Activated CD4-positive, alpha-beta memory T cell treated with anti-CD3 and anti-CD28 coated beads for 36 hours (primary cell): ENCODE measurements at regions of chr19 and their contacts with region 1.

Region 1: DNA sequence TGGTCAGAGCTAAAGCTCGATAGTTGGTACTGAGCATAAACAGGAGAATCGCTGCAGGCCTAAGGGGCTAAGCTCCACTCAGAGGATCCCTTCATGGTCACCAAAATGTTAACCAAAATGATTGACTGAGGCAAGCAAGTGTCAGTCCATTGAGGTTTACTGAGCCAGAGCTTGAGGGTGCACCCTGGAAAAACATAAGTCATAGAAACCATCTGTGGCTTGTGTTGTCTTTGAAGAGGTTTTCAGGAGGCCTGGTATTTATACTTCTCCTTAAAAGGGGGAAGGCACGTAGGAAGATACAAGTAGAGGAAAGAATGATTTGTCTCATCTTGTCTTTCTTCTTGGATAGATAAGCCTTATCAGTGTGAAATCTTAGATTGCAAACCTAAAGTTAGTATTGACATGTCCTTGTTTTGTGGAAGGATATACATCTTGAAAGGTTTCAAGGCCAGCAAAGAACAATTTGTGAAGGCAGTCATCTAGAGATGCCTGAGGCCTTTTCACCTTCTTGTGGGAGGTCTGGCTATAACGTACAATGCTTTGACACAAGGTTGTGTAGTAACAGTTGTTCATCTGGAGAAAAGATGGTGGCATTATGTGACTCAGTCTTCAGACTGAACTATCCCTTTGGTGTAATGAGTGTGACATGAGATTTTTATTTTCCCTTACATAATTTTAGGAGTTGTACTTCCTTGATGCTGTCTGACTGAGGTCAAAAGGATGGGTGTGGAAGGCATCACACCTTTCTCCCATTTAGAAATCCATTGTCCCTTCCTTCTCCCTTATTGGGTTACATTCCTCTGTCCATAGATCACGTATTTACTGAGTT is 14.7 kb upstream of the CEACAM6 start:
- DNase-seq: peak; percentile 34
- H3K4me3 Mint-ChIP-seq: no peak overlapping the region
- H3K27ac Mint-ChIP-seq: peak overlapping the region; percentile 26
- H3K4me1 Mint-ChIP-seq: peaks cover 20% of the 10 kb centered on the region
- H3K27me3 Mint-ChIP-seq: peaks cover 38% of the 10 kb centered on the region

Region 2: DNA sequence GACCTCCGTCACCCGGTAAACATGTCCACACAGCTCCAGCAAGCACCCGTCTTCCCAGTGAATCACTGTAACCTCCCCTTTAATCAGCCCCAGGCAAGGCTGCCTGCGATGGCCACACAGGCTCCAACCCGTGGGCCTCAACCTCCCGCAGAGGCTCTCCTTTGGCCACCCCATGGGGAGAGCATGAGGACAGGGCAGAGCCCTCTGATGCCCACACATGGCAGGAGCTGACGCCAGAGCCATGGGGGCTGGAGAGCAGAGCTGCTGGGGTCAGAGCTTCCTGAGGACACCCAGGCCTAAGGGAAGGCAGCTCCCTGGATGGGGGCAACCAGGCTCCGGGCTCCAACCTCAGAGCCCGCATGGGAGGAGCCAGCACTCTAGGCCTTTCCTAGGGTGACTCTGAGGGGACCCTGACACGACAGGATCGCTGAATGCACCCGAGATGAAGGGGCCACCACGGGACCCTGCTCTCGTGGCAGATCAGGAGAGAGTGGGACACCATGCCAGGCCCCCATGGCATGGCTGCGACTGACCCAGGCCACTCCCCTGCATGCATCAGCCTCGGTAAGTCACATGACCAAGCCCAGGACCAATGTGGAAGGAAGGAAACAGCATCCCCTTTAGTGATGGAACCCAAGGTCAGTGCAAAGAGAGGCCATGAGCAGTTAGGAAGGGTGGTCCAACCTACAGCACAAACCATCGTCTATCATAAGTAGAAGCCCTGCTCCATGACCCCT is 41.2 kb before region 1 on chr19:
- CTCF ChIA-PET with region 1: no interaction called
- POLR2A ChIA-PET with region 1: no interaction called
- intact Hi-C with region 1: no loop called
- DNase-seq: no peak
- H3K4me3 Mint-ChIP-seq: no peak overlapping the region
- H3K27ac Mint-ChIP-seq: no peak overlapping the region
- H3K4me1 Mint-ChIP-seq: no peaks in the 10 kb centered on the region
- H3K27me3 Mint-ChIP-seq: peaks cover 21% of the 10 kb centered on the region

Region 3: GRCh38 chr19:41775360-41775695 is 34.7 kb after region 1 on chr19:
- CTCF ChIA-PET with region 1: interaction called, 3 read pairs
- POLR2A ChIA-PET with region 1: interaction called, 4 read pairs
- intact Hi-C with region 1: loop called (anchors 1 kb)
- DNase-seq: no peak
- H3K4me3 Mint-ChIP-seq: no peak overlapping the region
- H3K27ac Mint-ChIP-seq: no peak overlapping the region
- H3K4me1 Mint-ChIP-seq: peaks cover 34% of the 10 kb centered on the region
- H3K27me3 Mint-ChIP-seq: peaks cover 65% of the 10 kb centered on the region

Region 4: DNA sequence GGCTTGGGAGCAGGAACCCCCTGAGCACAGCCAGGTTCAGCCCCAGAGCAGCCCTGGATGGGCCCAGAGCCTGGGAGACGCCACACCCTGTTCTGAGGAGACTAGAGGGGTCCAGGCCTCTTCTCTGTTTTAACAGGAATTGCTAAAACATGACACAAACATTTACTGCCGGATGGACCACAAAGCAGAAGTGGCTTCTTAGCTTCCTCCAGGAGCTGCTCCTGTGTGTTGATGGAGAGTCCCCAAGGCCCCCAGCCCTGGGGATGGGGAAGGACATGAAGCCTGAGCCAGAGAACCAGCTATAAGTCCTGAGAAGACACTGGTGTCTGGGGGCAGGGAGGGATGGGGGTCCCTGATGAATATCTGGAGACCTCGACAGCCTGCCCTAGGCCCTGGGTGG is 70.4 kb after region 1 on chr19:
- CTCF ChIA-PET with region 1: no interaction called
- POLR2A ChIA-PET with region 1: no interaction called
- intact Hi-C with region 1: no loop called
- DNase-seq: no peak
- H3K4me3 Mint-ChIP-seq: no peak overlapping the region
- H3K27ac Mint-ChIP-seq: no peak overlapping the region
- H3K4me1 Mint-ChIP-seq: no peaks in the 10 kb centered on the region
- H3K27me3 Mint-ChIP-seq: peaks cover 4% of the 10 kb centered on the region

Region 5: DNA sequence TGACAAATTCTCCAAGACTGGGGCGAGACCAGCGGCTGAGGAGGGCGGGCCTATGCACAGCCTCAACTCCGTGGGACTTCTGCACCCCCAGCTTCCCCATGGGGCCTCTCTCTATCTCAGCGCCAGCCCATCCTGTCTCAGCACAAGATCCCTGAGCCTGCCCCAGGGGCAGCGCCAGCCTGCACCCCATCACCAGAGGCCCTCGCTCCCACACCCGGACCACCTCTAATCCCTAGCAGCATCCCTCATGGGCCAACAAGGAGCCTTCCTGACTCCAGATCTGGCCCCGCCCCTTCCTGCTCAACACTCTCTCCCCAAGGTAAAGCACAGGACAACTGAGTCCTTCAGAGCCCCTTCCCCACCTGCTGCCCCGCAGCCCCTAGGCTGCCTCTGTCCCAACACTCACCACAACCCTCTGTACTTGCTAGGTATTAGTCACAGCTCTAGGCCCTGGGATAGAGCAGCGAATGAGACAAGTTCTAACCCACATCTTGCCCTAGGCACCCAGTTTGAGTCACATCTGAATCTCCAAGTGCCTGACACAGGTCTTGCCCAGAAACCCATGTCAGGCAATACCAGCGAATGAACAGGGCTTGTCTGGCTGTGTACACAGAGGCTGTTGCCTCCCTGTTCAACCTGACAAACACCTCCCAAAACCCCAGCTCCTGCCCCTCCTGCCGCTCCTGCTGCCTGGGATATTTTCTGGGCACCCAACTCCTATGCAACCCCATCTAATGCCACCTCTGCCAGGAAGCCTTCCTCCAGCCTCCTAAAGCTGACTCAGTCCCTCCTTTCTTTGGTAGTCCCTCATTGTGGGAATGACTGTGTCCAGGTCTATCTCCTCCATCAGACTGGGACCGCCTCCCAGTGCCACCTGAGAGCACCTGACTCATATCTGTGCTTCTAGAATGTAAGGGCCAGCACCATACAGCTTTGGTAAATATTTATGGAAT is 310.8 kb after region 1 on chr19:
- CTCF ChIA-PET with region 1: no interaction called
- POLR2A ChIA-PET with region 1: no interaction called
- intact Hi-C with region 1: no loop called
- DNase-seq: peak; percentile 74
- H3K4me3 Mint-ChIP-seq: no peak overlapping the region
- H3K27ac Mint-ChIP-seq: peak overlapping the region; percentile 82
- H3K4me1 Mint-ChIP-seq: peaks cover 22% of the 10 kb centered on the region
- H3K27me3 Mint-ChIP-seq: no peaks in the 10 kb centered on the region